Ascending aorta (tissue), 2 donors: ENCODE measurements at regions of chr14 and their contacts with region 1.

Region 1: GRCh38 chr14:95527387-95528002 is 7.4 kb upstream of the GLRX5 start:
- DNase-seq: peak in 1 of 2 donors; percentile 89
- H3K4me3 ChIP-seq: peak overlapping the region in 1 of 2 donors; percentile 36
- H3K27ac ChIP-seq: peak overlapping the region; percentile 81 to 83
- H3K4me1 ChIP-seq: peaks cover 11 to 60% of the 10 kb centered on the region in 2 donors
- H3K27me3 ChIP-seq: no peaks in the 10 kb centered on the region
- CTCF ChIP-seq: peak; percentile 76 to 87 (median 84)

Region 2: GRCh38 chr14:95442633-95443021 is 84.9 kb before region 1 on chr14:
- intact Hi-C with region 1: loop called (anchors 1 kb)
- DNase-seq: peak; percentile 19 to 90
- H3K4me3 ChIP-seq: no peak overlapping the region
- H3K27ac ChIP-seq: peak overlapping the region; percentile 25 to 34
- H3K4me1 ChIP-seq: no peaks in the 10 kb centered on the region
- H3K27me3 ChIP-seq: no peaks in the 10 kb centered on the region
- CTCF ChIP-seq: peak; percentile 80 to 90 (median 84)

Region 3: GRCh38 chr14:95483309-95484165 is 44.0 kb before region 1 on chr14:
- intact Hi-C with region 1: loop called (anchors 2 kb)
- DNase-seq: peak; percentile 64 to 94
- H3K4me3 ChIP-seq: no peak overlapping the region
- H3K27ac ChIP-seq: peak overlapping the region; percentile 78 to 82
- H3K4me1 ChIP-seq: peaks cover 6 to 24% of the 10 kb centered on the region in 2 donors
- H3K27me3 ChIP-seq: no peaks in the 10 kb centered on the region
- CTCF ChIP-seq: no peak

Region 4: DNA sequence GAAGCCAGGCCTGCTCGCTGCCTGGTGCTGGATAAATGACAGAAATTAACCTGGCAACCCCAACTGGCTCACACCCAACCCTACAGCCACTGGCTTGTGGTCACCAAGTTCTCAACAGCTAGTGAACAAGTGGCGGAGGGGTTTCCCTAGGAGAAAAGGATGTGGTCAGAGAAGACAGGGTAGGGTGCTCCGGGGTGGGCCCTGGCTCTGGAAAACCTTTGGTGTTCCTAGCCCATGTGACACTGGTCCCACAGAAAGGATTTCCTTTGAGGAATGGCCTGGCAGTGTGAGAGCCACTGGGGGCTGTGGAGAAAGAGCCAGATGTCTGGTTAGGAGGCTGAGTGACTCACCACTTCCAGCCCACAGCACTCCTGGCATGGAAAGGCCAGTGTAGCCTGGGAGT is 19.8 kb before region 1 on chr14:
- intact Hi-C with region 1: loop called (anchors 2 kb)
- DNase-seq: peak in 1 of 2 donors; percentile 88
- H3K4me3 ChIP-seq: peak overlapping the region in 1 of 2 donors; percentile 1
- H3K27ac ChIP-seq: peak overlapping the region; percentile 84 to 88
- H3K4me1 ChIP-seq: peaks cover 15 to 44% of the 10 kb centered on the region in 2 donors
- H3K27me3 ChIP-seq: no peaks in the 10 kb centered on the region
- CTCF ChIP-seq: no peak